Colonic mucosa (tissue), 4 donors: ENCODE measurements at regions of chr12 and their contacts with region 1.

Region 1: GRCh38 chr12:67648521-67649260 is at the start of gene DYRK2:
- DNase-seq: peak; percentile 80
- H3K4me3 ChIP-seq: peak within 1 kb of the TSS; percentile 94
- H3K27ac ChIP-seq: peak within 1 kb of the TSS; percentile 99
- H3K4me1 ChIP-seq: peaks cover 5% of the 10 kb centered on the region
- H3K27me3 ChIP-seq: no peaks in the 10 kb centered on the region
- CTCF ChIP-seq: no peak
- total RNA-seq, gene DYRK2: 66.0 to 112 TPM

Region 2: GRCh38 chr12:67355578-67356379 is 292.9 kb before region 1 on chr12:
- intact Hi-C with region 1: loop called (anchors 5 kb)
- DNase-seq: no peak
- H3K4me3 ChIP-seq: no peak overlapping the region
- H3K27ac ChIP-seq: no peak overlapping the region
- H3K4me1 ChIP-seq: no peaks in the 10 kb centered on the region
- H3K27me3 ChIP-seq: no peaks in the 10 kb centered on the region
- CTCF ChIP-seq: peak; percentile 57

Region 3: DNA sequence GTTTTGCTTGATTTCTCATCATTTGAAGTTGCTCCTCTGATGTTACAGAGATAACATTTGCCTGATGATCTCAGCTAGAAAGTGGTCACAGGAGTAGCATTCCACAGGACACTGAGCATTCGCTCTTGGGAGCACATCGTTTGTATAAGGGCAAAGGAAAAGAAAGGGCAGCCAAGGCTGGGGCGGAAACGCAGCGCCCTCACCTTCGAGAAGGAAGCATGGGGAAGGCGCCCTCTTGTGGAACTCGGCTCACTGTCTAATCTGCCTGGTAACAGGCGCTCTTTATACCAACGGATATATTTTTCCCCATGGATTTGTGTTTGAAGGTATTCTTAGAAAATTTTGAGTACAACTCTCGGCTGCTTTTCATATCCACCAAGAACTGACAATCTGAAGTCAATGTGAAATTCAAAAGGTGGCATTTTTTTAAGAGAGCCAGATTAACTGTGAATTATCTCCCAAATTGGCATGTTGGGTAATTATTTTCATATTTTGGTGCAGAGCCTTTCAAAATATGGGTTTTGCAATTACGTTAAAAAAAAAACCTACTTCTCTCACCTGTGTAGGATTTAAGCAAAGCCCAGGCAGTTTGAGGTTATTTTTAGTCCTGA is 206.8 kb before region 1 on chr12:
- intact Hi-C with region 1: loop called (anchors 10 kb)
- DNase-seq: peak; percentile 95
- H3K4me3 ChIP-seq: no peak overlapping the region
- H3K27ac ChIP-seq: no peak overlapping the region
- H3K4me1 ChIP-seq: no peaks in the 10 kb centered on the region
- H3K27me3 ChIP-seq: no peaks in the 10 kb centered on the region
- CTCF ChIP-seq: peak; percentile 70

Region 4: DNA sequence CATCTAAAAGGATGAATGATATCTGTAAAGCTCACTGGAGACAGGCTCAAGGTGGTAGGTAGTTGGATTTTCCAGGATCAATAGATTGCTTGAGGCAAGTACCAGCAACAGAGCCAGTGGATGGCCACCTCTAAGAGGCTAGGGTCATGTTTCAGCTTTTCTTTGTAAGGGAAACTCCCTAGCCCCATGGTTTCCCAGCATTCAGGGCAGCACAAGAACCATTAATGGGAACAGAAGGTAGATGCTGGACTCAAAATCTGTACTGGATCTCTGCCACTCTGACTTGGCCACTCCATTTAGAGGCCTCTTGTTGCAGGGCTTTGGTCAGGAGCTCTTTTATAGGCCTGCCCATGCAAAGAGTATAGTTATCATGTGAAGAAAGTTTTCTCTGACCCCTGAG is 76.2 kb before region 1 on chr12:
- intact Hi-C with region 1: no loop called
- DNase-seq: no peak
- H3K4me3 ChIP-seq: no peak overlapping the region
- H3K27ac ChIP-seq: no peak overlapping the region
- H3K4me1 ChIP-seq: no peaks in the 10 kb centered on the region
- H3K27me3 ChIP-seq: no peaks in the 10 kb centered on the region
- CTCF ChIP-seq: no peak